Activated CD4-positive, alpha-beta memory T cell treated with anti-CD3 and anti-CD28 coated beads for 36 hours (primary cell): ENCODE measurements at regions of chr1 and their contacts with region 1.

Region 1: GRCh38 chr1:157580179-157580827 is 17.6 kb downstream of the FCRL4 start:
- DNase-seq: no peak
- H3K4me3 Mint-ChIP-seq: no peak overlapping the region
- H3K27ac Mint-ChIP-seq: no peak overlapping the region
- H3K4me1 Mint-ChIP-seq: no peaks in the 10 kb centered on the region
- H3K27me3 Mint-ChIP-seq: peaks cover 5% of the 10 kb centered on the region

Region 2: DNA sequence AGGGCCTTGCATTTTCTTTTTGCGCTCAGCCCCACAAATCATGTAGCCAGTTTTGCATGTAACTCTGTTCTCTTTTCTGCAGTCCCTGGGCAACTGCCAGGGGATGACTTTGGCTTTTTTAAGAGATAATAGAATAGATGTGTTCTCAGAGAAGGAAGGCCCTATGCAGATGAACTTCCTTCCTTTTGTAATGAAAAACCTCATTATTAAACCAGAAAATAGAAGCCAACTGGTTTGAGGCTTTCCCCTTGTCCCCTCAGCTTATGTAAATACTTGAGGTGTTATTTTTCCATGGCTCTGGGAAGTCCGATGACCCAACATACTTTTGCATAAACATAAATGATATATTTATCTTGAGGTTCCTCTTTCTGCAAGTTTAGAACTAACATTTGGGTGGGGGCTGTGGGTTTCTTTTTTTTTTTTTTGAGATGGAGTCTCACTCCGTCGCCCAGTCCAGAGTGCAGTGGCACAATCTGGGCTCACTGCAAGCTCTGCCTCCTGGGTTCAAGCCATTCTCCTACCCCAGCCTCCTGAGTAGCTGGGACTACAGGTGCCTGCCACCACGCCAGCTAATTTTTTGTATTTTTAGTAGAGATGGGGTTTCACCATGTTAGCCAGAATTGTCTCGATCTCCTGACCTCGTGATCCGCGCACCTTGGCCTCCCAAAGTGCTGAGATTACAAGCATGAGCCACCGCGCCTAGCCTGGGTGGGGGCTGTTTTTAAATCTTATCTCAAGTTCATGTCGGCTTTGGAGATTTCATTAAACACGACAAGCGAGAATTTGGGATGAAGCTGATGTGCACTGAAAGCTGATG is 13.6 kb before region 1 on chr1:
- CTCF ChIA-PET with region 1: interaction called, 13 read pairs
- POLR2A ChIA-PET with region 1: interaction called, 3 read pairs
- intact Hi-C with region 1: no loop called
- DNase-seq: no peak
- H3K4me3 Mint-ChIP-seq: no peak overlapping the region
- H3K27ac Mint-ChIP-seq: no peak overlapping the region
- H3K4me1 Mint-ChIP-seq: no peaks in the 10 kb centered on the region
- H3K27me3 Mint-ChIP-seq: peaks cover 26% of the 10 kb centered on the region

Region 3: GRCh38 chr1:157626099-157626498 is 45.8 kb after region 1 on chr1:
- CTCF ChIA-PET with region 1: interaction called, 3 read pairs
- POLR2A ChIA-PET with region 1: no interaction called
- intact Hi-C with region 1: loop called (anchors 5 kb)
- DNase-seq: peak; percentile 37
- H3K4me3 Mint-ChIP-seq: no peak overlapping the region
- H3K27ac Mint-ChIP-seq: no peak overlapping the region
- H3K4me1 Mint-ChIP-seq: no peaks in the 10 kb centered on the region
- H3K27me3 Mint-ChIP-seq: peaks cover 19% of the 10 kb centered on the region

Region 4: DNA sequence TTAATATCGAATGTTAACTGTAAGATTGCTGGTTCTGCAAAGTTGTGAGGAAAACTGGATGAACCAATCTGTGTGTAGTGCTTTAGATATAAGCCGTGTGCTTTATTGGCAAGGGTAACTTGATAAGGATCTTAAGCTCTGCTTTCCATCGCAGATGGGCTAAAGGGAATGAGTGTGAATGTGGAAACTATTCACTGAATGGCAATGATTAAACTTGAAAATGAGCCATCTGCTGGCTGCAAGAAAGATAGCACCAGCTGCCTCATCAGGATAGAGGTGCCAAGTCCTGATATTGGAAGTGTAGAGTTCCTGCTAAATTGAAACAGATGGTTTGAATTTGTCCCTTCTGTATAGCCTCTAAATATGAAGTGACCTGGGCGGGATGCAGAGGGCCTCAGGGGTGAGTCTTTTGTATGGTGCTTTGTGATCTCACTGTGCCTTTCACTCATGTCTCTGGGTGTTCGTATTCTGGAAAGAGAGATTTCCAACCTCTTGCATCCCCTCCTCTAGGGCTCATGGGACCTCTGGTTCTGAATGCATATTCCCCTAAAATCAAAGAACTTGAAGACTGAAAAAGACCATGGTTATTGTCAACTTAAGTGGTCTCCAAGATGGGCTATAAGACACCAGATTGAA is 111.1 kb after region 1 on chr1:
- CTCF ChIA-PET with region 1: interaction called, 36 read pairs
- POLR2A ChIA-PET with region 1: no interaction called
- intact Hi-C with region 1: loop called (anchors 2 kb)
- DNase-seq: no peak
- H3K4me3 Mint-ChIP-seq: no peak overlapping the region
- H3K27ac Mint-ChIP-seq: no peak overlapping the region
- H3K4me1 Mint-ChIP-seq: no peaks in the 10 kb centered on the region
- H3K27me3 Mint-ChIP-seq: peaks cover 3% of the 10 kb centered on the region

Region 5: DNA sequence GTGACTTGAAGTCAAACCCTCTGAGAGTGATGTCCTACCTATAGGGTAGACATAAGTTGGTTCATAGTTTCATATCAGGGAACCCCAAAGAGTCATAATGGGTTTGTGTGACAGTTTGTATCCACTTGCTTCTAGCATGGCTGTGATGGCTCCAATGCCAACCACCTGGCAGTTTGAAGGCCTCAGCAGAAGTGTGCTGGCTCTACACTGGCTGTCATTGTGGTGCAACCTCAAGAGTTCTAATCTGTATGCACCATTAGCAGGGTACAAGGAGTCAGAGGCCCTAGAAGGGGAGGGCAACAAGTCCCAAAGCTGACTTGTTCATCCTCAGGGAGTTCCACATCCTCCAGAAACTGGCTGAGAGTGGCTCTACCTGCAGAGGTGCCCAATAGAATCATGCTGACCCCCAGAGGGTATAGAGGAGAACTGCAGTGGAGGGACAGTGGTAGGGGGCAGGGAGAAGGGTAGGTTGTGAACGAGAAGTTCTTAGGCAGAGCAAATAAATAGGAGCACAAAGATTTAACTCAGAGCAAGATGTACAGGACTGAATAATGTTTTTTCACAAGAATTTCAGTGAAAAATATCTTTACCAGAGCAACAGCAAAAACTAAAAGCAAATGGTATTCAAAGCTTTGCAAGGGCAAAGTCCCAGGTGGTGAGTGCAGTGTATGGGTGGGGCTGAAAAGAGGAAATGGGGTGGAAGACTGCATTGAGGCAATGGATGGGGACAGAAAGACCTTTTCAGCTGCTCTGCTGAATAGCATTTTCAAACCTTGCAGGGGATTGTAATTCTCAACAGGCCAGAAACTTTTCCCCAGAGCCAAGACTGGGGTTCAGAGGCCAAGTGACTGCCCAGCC is 193.4 kb after region 1 on chr1:
- CTCF ChIA-PET with region 1: interaction called, 7 read pairs
- POLR2A ChIA-PET with region 1: no interaction called
- intact Hi-C with region 1: loop called (anchors 10 kb)
- DNase-seq: no peak
- H3K4me3 Mint-ChIP-seq: no peak overlapping the region
- H3K27ac Mint-ChIP-seq: no peak overlapping the region
- H3K4me1 Mint-ChIP-seq: no peaks in the 10 kb centered on the region
- H3K27me3 Mint-ChIP-seq: peaks cover 17% of the 10 kb centered on the region